ENCODE measurements at regions of chrX and their contacts with region 1.

Region 1: DNA sequence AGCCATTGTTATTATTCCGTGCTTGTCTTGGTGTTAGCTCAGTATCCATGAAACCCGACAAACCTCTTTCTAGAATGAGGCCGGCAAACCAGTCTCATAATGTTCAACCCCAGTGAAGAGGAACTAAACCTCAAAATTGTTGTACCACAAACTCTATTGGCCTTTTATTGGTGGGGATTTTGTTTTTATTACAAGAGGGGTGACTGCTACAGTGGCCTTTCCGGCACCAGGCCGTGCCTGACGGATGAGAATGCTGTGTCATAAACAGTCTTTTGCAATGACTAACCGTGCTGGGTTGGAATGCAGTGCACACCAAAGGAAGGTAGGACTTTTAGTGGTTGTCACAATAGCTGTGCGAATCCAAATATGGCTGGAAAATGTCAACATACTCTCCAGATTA is 60.8 kb downstream of the SHROOM2 start:
- DNase-seq: peak; percentile 74
- ATAC-seq: peak; percentile 70
- H3K4me3 ChIP-seq: 0 out of 6 replicates have a peak overlapping the region, but pooled peaks of 1 of the 3 experiments have one; percentile 10
- H3K27ac ChIP-seq: no peak overlapping the region
- H3K4me1 ChIP-seq: peaks cover 41% of the 10 kb centered on the region
- H3K27me3 ChIP-seq: no peaks in the 10 kb centered on the region
- CTCF ChIP-seq: no peak
- EP300 ChIP-seq: no peak
- POLR2A ChIP-seq: no peak
- RAD21 ChIP-seq: no peak

Region 2: DNA sequence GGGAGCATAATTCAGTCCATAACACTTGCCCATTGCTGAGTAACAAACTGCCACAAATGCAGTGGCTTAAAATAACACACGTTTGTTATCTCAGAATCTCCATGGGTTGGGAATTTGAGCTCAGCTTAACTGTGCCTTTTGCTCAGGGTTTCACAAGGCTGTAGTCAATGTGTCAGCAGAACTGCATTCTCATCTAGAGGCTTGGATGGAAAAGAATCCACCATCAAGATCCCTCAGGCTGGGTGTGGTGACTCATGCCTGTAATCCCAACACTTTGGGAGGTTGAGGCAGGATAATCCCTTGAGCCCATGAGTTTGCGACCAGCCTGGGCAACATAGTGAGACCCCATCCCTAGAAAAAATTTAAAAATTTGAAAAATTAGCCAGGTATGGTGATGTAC is 408.1 kb before region 1 on chrX:
- CTCF ChIA-PET with region 1: no interaction called
- POLR2A ChIA-PET with region 1: no interaction called
- in situ Hi-C with region 1: no loop called
- intact Hi-C with region 1: no loop called
- DNase-seq: no peak
- ATAC-seq: no peak
- H3K4me3 ChIP-seq: no peak overlapping the region
- H3K27ac ChIP-seq: no peak overlapping the region
- H3K4me1 ChIP-seq: no peaks in the 10 kb centered on the region
- H3K27me3 ChIP-seq: no peaks in the 10 kb centered on the region
- CTCF ChIP-seq: no peak
- EP300 ChIP-seq: no peak
- POLR2A ChIP-seq: no peak
- RAD21 ChIP-seq: no peak

Region 3: DNA sequence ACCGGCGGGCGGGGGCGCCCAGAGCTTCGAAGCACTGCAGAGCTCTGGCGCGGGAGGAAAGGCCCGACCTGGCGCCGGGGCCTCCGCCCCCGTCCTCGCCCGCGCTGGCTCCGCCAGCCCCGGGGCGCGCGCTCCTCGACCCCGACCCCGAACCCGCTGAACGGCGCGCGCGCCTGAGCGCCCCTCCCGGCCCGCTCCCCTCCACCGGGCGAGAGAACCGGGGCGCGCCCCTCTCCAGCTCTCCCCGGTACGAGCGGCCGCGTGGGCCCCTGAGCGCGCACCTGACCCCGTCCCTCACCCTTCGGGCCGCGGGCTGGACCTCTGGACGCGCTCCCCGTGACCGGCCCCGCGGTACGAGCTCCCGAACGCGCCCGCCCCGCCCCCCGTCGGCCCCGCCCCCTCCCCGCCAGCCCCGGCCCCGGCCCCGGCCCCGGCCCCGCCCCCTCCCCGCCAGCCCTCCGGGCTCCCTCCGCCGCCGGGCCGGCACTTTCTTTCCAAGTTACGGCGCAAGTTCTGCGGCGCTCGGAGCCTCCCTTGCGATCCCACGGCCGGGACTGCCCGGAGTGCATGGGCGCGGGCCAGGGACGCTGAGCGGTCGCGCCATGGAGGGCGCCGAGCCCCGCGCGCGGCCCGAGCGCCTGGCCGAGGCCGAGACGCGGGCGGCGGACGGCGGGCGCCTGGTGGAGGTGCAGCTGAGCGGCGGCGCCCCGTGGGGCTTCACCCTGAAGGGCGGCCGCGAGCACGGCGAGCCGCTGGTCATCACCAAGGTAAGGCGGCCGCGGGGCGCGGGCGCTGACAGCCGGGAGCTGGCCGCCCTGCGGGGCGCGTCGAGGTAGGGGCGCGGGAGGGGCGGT is 60.9 kb before region 1 on chrX and contains the start of gene SHROOM2:
- CTCF ChIA-PET with region 1: no interaction called
- POLR2A ChIA-PET with region 1: interaction called, 6 read pairs
- in situ Hi-C with region 1: no loop called
- intact Hi-C with region 1: loop called (anchors 5 kb)
- DNase-seq: no peak
- ATAC-seq: peak; percentile 57
- H3K4me3 ChIP-seq: peak within 1 kb of the TSS; percentile 68 to 76 (median 71)
- H3K27ac ChIP-seq: peak within 1 kb of the TSS; percentile 51
- H3K4me1 ChIP-seq: peaks cover 22% of the 10 kb centered on the region
- H3K27me3 ChIP-seq: no peaks in the 10 kb centered on the region; a peak in 1 of 5 replicates
- CTCF ChIP-seq: no peak
- EP300 ChIP-seq: no peak
- POLR2A ChIP-seq: no peak
- RAD21 ChIP-seq: no peak
- total RNA-seq, gene SHROOM2: 1.3 and 1.4 TPM in 2 replicates

Region 4: DNA sequence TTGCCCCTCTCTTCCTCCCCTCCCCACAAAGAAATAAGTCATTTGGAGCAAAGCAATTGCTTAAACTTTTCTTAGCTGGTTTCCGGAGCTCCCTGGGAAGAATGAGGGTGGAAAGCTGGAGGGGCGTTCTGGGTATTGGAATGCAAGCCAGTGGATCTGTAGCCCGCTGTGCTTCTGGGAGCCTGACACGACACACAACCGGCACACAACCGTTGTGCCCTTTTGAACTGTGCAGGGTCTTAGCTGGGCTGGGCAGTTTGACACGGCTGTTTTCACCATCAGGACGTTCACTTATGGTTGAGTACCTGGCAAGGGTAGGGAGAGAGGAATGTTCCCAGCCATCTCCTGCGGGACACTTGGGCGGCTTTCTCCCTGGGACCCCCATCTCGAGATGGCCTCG is 22.5 kb before region 1 on chrX:
- CTCF ChIA-PET with region 1: no interaction called
- POLR2A ChIA-PET with region 1: interaction called, 15 read pairs
- in situ Hi-C with region 1: no loop called
- intact Hi-C with region 1: loop called (anchors 2 kb)
- DNase-seq: peak; percentile 28
- ATAC-seq: peak; percentile 80
- H3K4me3 ChIP-seq: peak overlapping the region; percentile 38 to 52 (median 38); a peak in 5 of 6 replicates
- H3K27ac ChIP-seq: peak overlapping the region; percentile 47
- H3K4me1 ChIP-seq: peaks cover 25% of the 10 kb centered on the region
- H3K27me3 ChIP-seq: no peaks in the 10 kb centered on the region
- CTCF ChIP-seq: no peak
- EP300 ChIP-seq: no peak
- POLR2A ChIP-seq: no peak
- RAD21 ChIP-seq: no peak